Mammary epithelial cell (primary cell): ENCODE measurements at regions of chr6 and their contacts with region 1.

Region 1: DNA sequence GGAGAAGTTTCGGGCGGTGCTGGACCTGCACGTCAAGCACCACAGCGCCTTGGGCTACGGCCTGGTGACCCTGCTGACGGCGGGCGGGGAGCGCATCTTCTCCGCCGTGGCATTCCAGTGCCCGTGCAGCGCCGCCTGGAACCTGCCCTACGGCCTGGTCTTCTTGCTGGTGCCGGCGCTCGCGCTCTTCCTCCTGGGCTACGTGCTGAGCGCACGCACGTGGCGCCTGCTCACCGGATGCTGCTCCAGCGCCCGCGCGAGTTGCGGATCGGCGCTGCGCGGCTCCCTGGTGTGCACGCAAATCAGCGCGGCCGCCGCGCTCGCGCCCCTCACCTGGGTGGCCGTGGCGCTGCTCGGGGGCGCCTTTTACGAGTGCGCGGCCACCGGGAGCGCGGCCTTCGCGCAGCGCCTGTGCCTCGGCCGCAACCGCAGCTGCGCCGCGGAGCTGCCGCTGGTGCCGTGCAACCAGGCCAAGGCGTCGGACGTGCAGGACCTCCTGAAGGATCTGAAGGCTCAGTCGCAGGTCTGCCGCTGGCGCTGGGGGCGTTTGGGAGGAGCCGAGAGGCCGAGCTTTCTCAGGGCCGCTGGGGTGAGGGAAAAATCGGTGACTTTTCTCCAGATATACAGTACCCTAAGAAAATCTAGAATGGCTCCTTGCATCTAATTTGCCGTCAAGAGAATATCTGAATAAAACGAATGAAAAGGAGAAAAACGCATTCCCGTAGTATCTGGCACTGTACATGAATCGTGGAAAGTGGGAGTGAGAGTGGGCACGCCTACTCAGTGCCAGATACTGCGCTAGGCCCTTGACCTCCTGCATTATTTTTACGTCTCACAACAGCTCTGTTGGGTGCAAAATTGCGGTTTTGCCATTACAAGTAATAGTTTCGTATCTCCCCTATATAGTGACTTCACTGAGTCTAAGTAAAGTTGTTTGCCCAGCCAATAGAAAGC is 1.0 kb downstream of the CALHM6 start:
- DNase-seq: peak; percentile 41
- H3K4me3 ChIP-seq: peak overlapping the region in 2 of 3 experiments; percentile 36 to 46
- H3K27ac ChIP-seq: no peak overlapping the region
- H3K4me1 ChIP-seq: peaks cover 10% of the 10 kb centered on the region
- H3K27me3 ChIP-seq: no peaks in the 10 kb centered on the region
- CTCF ChIP-seq: no peak

Region 2: DNA sequence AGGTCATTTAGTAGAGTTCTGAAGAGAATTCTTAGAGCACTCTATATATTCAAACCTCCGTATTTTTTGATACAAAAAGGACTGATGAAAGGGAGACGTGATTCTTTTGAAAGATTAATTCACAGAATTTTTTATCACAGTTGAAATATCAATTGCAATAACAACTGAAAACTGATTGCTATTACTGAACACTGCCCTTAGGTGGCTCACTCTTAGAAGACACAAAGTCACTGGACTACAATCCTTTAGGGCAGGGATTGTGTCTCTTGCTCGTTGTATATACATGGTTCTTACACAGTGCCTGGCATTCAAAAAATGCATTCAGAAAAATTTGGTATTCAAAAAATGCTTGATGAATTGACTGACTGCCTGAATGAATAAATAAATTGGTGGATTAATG is 18.1 kb before region 1 on chr6:
- CTCF ChIA-PET with region 1: no interaction called
- dilution Hi-C with region 1: no loop called
- in situ Hi-C with region 1: no loop called
- intact Hi-C with region 1: no loop called
- DNase-seq: peak; percentile 27
- H3K4me3 ChIP-seq: no peak overlapping the region
- H3K27ac ChIP-seq: no peak overlapping the region
- H3K4me1 ChIP-seq: peaks cover 28% of the 10 kb centered on the region
- H3K27me3 ChIP-seq: no peaks in the 10 kb centered on the region
- CTCF ChIP-seq: peak; percentile 47 to 63

Region 3: DNA sequence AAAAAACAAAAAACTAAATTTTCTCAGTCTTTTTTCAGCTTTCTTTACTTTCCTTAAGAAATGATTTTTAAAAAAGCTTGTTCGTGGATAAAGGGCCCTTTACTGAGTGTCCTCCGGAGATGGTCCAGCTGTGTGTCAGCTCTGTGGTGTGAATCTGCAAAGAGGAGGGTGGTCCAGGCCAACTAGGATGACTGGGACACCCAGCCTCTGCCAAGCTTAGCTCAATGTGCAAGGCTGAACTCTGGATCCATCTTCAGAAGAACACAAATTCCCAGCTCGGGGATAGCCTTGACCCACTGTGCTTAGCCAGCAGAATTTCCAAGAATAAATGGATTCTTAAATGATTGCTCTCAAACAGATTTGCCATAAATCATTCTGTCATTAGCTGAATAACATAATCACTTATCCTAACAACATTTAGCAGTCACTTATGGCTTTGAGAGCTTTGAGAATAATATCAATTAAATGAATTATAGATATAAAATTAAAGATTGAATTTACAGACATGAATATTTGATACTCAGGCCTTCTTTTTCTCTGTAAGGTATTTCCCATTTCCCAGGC is 35.0 kb after region 1 on chr6:
- CTCF ChIA-PET with region 1: no interaction called
- dilution Hi-C with region 1: no loop called
- in situ Hi-C with region 1: no loop called
- intact Hi-C with region 1: loop called (anchors 5 kb)
- DNase-seq: no peak
- H3K4me3 ChIP-seq: no peak overlapping the region
- H3K27ac ChIP-seq: no peak overlapping the region
- H3K4me1 ChIP-seq: peaks cover 7% of the 10 kb centered on the region
- H3K27me3 ChIP-seq: no peaks in the 10 kb centered on the region
- CTCF ChIP-seq: no peak

Region 4: GRCh38 chr6:116518621-116519368 is 56.6 kb after region 1 on chr6:
- CTCF ChIA-PET with region 1: no interaction called
- dilution Hi-C with region 1: no loop called
- in situ Hi-C with region 1: no loop called
- intact Hi-C with region 1: no loop called
- DNase-seq: no peak
- H3K4me3 ChIP-seq: no peak overlapping the region
- H3K27ac ChIP-seq: no peak overlapping the region
- H3K4me1 ChIP-seq: peaks cover 4% of the 10 kb centered on the region
- H3K27me3 ChIP-seq: no peaks in the 10 kb centered on the region
- CTCF ChIP-seq: no peak